Panc1 (cell line): ENCODE measurements at regions of chr1 and their contacts with region 1.

Region 1: GRCh38 chr1:88730132-88730675 is 46.1 kb downstream of the PKN2 start:
- DNase-seq: no peak
- ATAC-seq: no peak
- H3K4me3 ChIP-seq: no peak overlapping the region
- H3K27ac ChIP-seq: no peak overlapping the region
- H3K4me1 ChIP-seq: peaks cover 9% of the 10 kb centered on the region
- H3K27me3 ChIP-seq: no peaks in the 10 kb centered on the region
- CTCF ChIP-seq: no peak

Region 2: DNA sequence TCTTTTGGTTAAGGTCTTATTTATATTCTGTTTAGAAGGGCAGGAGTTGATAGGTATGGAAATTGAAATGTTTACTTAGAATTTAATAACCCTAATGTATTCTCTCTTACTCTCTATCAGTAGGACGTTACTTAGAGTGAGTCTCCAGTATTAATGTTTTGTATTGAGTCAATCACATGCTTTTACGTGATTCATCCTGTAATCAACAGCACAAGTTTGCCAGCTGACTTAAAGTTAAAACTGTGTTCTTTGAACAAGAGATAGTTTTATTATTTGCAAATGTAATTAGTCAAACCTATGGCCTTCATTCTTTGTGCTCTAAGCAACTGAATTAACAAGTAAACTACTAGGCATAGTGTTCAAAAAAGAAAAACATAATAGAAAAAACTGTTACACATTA is 11.2 kb after region 1 on chr1:
- CTCF ChIA-PET with region 1: no interaction called
- POLR2A ChIA-PET with region 1: interaction called, 22 read pairs
- in situ Hi-C with region 1: no loop called
- intact Hi-C with region 1: no loop called
- DNase-seq: peak; percentile 32
- ATAC-seq: no peak
- H3K4me3 ChIP-seq: no peak overlapping the region
- H3K27ac ChIP-seq: no peak overlapping the region
- H3K4me1 ChIP-seq: peaks cover 7% of the 10 kb centered on the region
- H3K27me3 ChIP-seq: no peaks in the 10 kb centered on the region
- CTCF ChIP-seq: no peak